Prostate gland (tissue), 2 donors: ENCODE measurements at regions of chr22 and their contacts with region 1.

Region 1: DNA sequence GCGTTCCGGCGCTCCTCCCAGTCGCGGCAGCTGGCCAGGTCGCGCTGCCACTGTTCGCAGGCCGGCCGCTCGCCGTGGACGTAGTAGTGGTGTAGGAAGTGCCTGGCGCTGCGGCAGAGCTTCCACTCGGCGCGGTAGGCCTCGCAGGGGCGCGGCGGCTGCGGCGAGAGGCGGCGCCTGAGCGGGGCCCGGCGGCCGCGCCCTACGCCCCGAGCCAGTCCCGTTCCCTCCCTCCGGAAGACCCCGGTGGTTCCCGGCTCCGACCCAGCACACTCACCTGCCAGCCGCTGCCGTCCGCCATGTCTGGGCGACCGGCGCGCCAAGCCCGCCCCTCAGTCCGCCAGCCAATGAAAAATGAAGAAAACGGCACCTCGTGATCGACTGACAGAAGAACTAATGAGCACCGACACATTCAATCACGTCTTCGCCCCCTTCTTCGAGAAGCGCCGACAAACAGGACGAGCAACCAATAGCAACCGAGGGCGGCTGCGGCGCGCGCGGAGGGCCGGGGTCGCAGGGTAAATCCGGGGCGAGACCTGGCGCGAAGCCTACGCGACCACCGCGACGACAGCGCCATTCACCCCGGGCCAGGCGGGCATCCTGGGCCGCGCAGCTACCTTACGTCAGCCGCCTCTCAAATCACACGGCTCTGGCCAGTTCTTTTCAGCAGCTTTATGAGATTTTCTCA is at the start of gene C22orf39:
- DNase-seq: peak; percentile 93
- H3K4me3 ChIP-seq: peak within 1 kb of the TSS; percentile 71 to 91
- H3K27ac ChIP-seq: peak within 1 kb of the TSS; percentile 93 to 94
- H3K4me1 ChIP-seq: peaks cover 3% of the 10 kb centered on the region
- H3K27me3 ChIP-seq: no peaks in the 10 kb centered on the region
- CTCF ChIP-seq: no peak
- POLR2A ChIP-seq: peak; percentile 76
- total RNA-seq, gene C22orf39: 57.4 to 85.8 TPM

Region 2: GRCh38 chr22:19291580-19292457 is 155.7 kb before region 1 on chr22 and contains the start of gene CLTCL1:
- intact Hi-C with region 1: loop called (anchors 10 kb)
- DNase-seq: peak; percentile 80
- H3K4me3 ChIP-seq: peak within 1 kb of the TSS; percentile 93 to 96
- H3K27ac ChIP-seq: peak within 1 kb of the TSS; percentile 73 to 78
- H3K4me1 ChIP-seq: no peaks in the 10 kb centered on the region
- H3K27me3 ChIP-seq: no peaks in the 10 kb centered on the region
- CTCF ChIP-seq: no peak
- POLR2A ChIP-seq: peak; percentile 18
- total RNA-seq, gene CLTCL1: 12.1 to 26.2 TPM

Region 3: DNA sequence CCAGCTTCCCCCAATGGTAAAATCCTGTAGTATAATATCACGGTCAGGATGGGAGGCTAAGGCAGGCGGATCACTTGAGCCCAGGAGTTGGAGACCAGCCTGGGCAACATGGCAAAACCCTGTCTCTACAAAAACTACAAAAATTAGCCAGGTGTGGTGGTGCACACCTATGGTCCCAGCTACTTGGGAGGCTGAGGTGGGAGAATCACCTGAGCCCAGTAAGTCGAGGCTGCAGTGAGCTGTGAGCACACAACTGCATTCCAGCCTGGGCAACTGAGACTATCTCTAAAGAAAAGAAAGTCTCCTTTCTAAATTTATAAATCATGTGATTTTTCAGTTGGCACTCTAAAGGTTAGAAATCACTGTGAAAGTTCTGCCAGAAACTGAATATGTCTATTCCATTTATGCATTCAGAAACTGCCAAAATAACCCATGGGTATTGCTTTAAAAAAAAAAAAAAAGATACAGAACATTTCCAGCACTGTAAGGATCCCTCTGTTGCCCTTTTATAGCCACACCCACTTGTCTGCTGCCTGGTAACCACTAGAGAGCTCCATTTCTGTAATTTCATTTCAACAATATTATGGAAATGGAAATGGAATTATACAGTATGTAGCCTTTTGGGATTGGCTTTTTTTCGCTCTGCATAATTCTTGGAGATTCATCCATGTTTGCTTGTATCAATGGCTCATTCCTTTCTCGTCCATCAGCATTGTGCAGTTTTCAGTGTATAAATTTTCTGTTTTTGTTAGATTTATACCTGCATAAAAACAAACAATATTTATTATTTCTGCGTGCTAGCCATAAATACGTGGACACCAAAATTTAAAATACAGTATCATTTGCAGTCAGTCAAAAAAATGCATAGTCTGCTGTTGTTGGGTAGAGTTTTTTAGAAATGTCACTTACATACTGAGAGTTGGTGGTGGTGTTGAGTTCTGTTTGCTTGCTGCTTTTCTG is 41.6 kb after region 1 on chr22:
- intact Hi-C with region 1: no loop called
- DNase-seq: no peak
- H3K4me3 ChIP-seq: no peak overlapping the region
- H3K27ac ChIP-seq: no peak overlapping the region
- H3K4me1 ChIP-seq: no peaks in the 10 kb centered on the region
- H3K27me3 ChIP-seq: no peaks in the 10 kb centered on the region
- CTCF ChIP-seq: no peak
- POLR2A ChIP-seq: no peak

Region 4: GRCh38 chr22:20084547-20085413 is 637.2 kb after region 1 on chr22:
- intact Hi-C with region 1: no loop called
- DNase-seq: no peak
- H3K4me3 ChIP-seq: no peak overlapping the region
- H3K27ac ChIP-seq: no peak overlapping the region
- H3K4me1 ChIP-seq: peaks cover 15% of the 10 kb centered on the region
- H3K27me3 ChIP-seq: no peaks in the 10 kb centered on the region
- CTCF ChIP-seq: no peak
- POLR2A ChIP-seq: no peak